A673 (cell line): ENCODE measurements at regions of chr10 and their contacts with region 1.

Region 1: DNA sequence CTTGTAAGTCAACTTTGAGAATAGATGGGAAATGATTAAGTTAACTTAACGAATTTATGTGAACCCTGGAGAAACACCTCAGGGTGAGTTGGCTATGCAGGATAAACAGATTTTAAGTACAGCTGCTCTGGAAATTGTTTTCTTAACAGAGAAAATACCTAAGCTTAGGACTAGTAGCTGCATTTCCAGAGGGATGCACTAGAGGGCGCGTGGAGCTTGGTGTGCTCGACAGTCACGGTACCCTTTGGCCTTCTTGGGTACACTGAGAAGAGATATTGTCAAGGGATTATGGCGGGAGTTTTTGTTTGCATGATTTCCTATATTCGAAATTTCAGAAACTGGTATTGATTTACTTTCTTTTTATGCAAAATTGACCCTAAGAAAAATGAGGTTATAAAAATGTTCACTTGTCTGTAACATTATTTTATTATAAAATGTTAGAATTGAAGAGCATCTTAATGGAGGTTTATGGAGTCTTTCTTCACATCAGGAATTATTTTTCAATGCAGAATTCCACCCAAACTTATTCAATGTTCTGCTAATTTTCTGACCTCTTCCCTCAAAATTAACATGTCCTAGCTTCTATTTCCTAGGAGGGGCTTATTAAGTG is 58.4 kb upstream of the MYO3A start:
- DNase-seq: peak; percentile 87
- H3K4me3 ChIP-seq: no peak overlapping the region
- H3K27ac ChIP-seq: no peak overlapping the region
- H3K4me1 ChIP-seq: no peaks in the 10 kb centered on the region
- H3K27me3 ChIP-seq: no peaks in the 10 kb centered on the region
- CTCF ChIP-seq: peak; percentile 96

Region 2: DNA sequence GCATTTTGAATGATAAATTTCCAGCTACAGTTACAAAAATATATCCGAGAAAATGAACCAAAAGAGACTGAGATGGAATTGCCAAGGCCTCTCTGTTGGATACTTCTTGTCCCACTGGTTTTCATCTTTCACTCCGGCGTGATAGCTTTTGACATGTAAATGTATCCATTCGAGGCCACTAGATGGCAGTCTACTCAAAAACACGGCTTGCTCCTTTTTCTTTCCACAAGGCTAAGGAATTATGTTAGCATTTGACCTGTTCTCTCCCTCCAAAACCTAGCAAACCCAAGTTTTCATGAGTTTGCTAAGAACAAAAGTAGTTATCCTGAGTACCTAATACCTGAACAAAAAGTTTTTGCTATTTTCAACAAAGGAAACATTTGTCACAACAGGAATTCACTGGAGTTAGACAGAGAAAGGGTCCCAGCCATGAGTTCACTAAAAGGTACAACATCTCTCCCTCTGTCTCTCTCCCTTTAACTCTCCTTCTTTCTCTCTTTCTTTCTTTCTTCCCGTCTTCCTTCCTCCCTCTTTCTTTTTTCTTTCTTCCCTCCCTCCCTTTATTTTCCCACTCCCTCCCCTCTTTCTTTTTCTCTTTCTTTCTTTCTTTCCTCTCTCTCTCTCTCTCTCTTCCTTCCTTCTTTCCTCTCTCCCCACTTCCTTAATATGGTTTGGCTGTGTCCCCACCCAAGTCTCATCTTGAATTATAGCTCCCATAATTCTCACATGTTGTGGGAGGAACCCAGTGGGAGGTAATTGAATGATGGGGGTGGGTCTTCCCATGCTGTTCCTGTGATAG is 149.5 kb before region 1 on chr10:
- CTCF ChIA-PET with region 1: interaction called, 5 read pairs
- POLR2A ChIA-PET with region 1: no interaction called
- intact Hi-C with region 1: loop called (anchors 10 kb)
- DNase-seq: peak; percentile 89
- H3K4me3 ChIP-seq: no peak overlapping the region
- H3K27ac ChIP-seq: no peak overlapping the region
- H3K4me1 ChIP-seq: no peaks in the 10 kb centered on the region
- H3K27me3 ChIP-seq: no peaks in the 10 kb centered on the region
- CTCF ChIP-seq: peak; percentile 79

Region 3: GRCh38 chr10:25758041-25758457 is 117.6 kb before region 1 on chr10:
- CTCF ChIA-PET with region 1: interaction called, 3 read pairs
- POLR2A ChIA-PET with region 1: no interaction called
- intact Hi-C with region 1: loop called (anchors 5 kb)
- DNase-seq: peak; percentile 83
- H3K4me3 ChIP-seq: no peak overlapping the region
- H3K27ac ChIP-seq: no peak overlapping the region
- H3K4me1 ChIP-seq: peaks cover 6% of the 10 kb centered on the region
- H3K27me3 ChIP-seq: no peaks in the 10 kb centered on the region
- CTCF ChIP-seq: peak; percentile 88